Activated CD4-positive, alpha-beta T cell treated with anti-CD3 and anti-CD28 coated beads for 36 hours (primary cell): ENCODE measurements at regions of chr7 and their contacts with region 1.

Region 1: GRCh38 chr7:135211179-135211945 is at the start of gene WDR91:
- DNase-seq: peak; percentile 98
- ATAC-seq: peak; percentile 94
- H3K4me3 Mint-ChIP-seq: peak within 1 kb of the TSS; percentile 89
- H3K27ac Mint-ChIP-seq: peak within 1 kb of the TSS; percentile 96
- H3K4me1 Mint-ChIP-seq: peaks cover 39% of the 10 kb centered on the region
- H3K27me3 Mint-ChIP-seq: no peaks in the 10 kb centered on the region
- total RNA-seq, gene WDR91: 11.8 to 12.0 TPM

Region 2: GRCh38 chr7:134316539-134317344 is 894.6 kb before region 1 on chr7 and contains the start of gene SLC35B4:
- CTCF ChIA-PET with region 1: no interaction called
- POLR2A ChIA-PET with region 1: interaction called, 3 read pairs
- intact Hi-C with region 1: loop called in 1 of 2 experiments (anchors 5 kb)
- DNase-seq: peak; percentile 97
- ATAC-seq: peak; percentile 100
- H3K4me3 Mint-ChIP-seq: peak within 1 kb of the TSS; percentile 85
- H3K27ac Mint-ChIP-seq: peak within 1 kb of the TSS; percentile 80
- H3K4me1 Mint-ChIP-seq: peaks cover 15% of the 10 kb centered on the region
- H3K27me3 Mint-ChIP-seq: peaks cover 6% of the 10 kb centered on the region
- total RNA-seq, gene SLC35B4: 13.6 to 15.5 TPM

Region 3: GRCh38 chr7:134646425-134647305 is 564.7 kb before region 1 on chr7 and contains the start of gene BPGM:
- CTCF ChIA-PET with region 1: no interaction called
- POLR2A ChIA-PET with region 1: no interaction called
- intact Hi-C with region 1: loop called in 1 of 2 experiments (anchors 1 kb)
- DNase-seq: peak; percentile 97
- ATAC-seq: peak; percentile 99
- H3K4me3 Mint-ChIP-seq: no peak within 1 kb of the TSS
- H3K27ac Mint-ChIP-seq: no peak within 1 kb of the TSS
- H3K4me1 Mint-ChIP-seq: peaks cover 44% of the 10 kb centered on the region
- H3K27me3 Mint-ChIP-seq: no peaks in the 10 kb centered on the region
- total RNA-seq, gene BPGM: 17.5 to 18.6 TPM

Region 4: DNA sequence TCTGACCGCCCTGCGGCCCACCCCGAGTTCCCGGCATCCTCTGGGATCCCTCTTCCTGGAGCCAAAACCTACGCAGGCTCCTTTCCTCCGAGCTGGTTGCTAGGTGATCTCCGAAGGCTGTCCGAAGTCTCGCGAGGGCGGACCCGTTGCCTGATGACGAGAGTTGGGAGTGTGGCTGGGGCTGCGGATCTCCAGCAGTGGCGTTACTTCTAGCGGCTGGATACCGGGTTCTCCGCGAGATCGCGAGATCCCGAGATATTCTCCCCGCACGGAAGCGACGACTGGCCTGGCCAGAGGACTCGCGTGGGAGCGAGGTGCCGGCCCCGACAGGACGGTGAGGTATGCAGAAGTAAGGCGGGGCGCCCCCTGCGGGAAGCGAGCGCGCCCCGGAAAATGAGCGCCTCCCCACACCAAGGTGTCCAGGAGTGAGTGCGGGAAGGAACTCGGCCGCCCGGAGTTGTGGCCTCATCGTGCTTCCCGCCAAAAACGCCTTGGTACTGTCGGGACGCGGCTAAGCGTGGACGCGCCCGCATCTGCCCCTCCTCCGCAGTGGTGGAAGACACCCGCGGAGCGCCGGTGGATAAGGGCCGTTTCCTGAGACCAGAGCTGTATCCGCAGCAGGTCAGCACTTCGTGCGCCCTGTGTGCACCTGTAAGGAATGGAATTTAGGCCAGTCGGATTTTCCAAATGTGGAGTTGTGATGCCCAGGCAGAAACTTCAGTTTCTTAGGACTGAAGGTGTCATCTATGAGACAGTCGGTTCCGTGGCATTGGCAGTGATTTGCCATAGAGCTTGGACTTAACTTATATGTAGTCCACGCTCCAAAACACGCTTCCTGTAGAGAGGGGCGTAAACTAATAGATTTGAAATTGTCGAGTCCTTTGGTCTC is 224.8 kb before region 1 on chr7 and contains the start of gene AGBL3:
- CTCF ChIA-PET with region 1: interaction called, 3 read pairs
- POLR2A ChIA-PET with region 1: no interaction called
- intact Hi-C with region 1: loop called (anchors 1 to 2 kb)
- DNase-seq: peak; percentile 95
- ATAC-seq: peak; percentile 97
- H3K4me3 Mint-ChIP-seq: peak within 1 kb of the TSS; percentile 91
- H3K27ac Mint-ChIP-seq: peak within 1 kb of the TSS; percentile 95
- H3K4me1 Mint-ChIP-seq: peaks cover 36% of the 10 kb centered on the region
- H3K27me3 Mint-ChIP-seq: no peaks in the 10 kb centered on the region
- total RNA-seq, gene AGBL3: 2.1 to 2.2 TPM

Region 5: GRCh38 chr7:135098391-135098790 is 113.0 kb before region 1 on chr7:
- CTCF ChIA-PET with region 1: no interaction called
- POLR2A ChIA-PET with region 1: no interaction called
- intact Hi-C with region 1: no loop called
- DNase-seq: no peak
- ATAC-seq: no peak
- H3K4me3 Mint-ChIP-seq: no peak overlapping the region
- H3K27ac Mint-ChIP-seq: no peak overlapping the region
- H3K4me1 Mint-ChIP-seq: no peaks in the 10 kb centered on the region
- H3K27me3 Mint-ChIP-seq: no peaks in the 10 kb centered on the region

Region 6: GRCh38 chr7:135170274-135170997 is 40.9 kb before region 1 on chr7 and contains the start of gene CYREN:
- CTCF ChIA-PET with region 1: interaction called, 6 read pairs
- POLR2A ChIA-PET with region 1: no interaction called
- intact Hi-C with region 1: loop called (anchors 1 kb)
- DNase-seq: peak; percentile 97
- ATAC-seq: peak; percentile 85
- H3K4me3 Mint-ChIP-seq: peak within 1 kb of the TSS; percentile 88
- H3K27ac Mint-ChIP-seq: peak within 1 kb of the TSS; percentile 96
- H3K4me1 Mint-ChIP-seq: peaks cover 50% of the 10 kb centered on the region
- H3K27me3 Mint-ChIP-seq: no peaks in the 10 kb centered on the region
- total RNA-seq, gene CYREN: 32.6 to 40.5 TPM

Region 7: GRCh38 chr7:135558337-135558767 is 347.0 kb after region 1 on chr7:
- CTCF ChIA-PET with region 1: no interaction called
- POLR2A ChIA-PET with region 1: no interaction called
- intact Hi-C with region 1: loop called in 1 of 2 experiments (anchors 1 kb)
- DNase-seq: peak; percentile 78
- ATAC-seq: peak; percentile 73
- H3K4me3 Mint-ChIP-seq: no peak overlapping the region
- H3K27ac Mint-ChIP-seq: no peak overlapping the region
- H3K4me1 Mint-ChIP-seq: peaks cover 29% of the 10 kb centered on the region
- H3K27me3 Mint-ChIP-seq: no peaks in the 10 kb centered on the region